Activated CD8-positive, alpha-beta T cell treated with anti-CD3 and anti-CD28 coated beads for 36 hours (primary cell): ENCODE measurements at regions of chr20 and their contacts with region 1.

Region 1: DNA sequence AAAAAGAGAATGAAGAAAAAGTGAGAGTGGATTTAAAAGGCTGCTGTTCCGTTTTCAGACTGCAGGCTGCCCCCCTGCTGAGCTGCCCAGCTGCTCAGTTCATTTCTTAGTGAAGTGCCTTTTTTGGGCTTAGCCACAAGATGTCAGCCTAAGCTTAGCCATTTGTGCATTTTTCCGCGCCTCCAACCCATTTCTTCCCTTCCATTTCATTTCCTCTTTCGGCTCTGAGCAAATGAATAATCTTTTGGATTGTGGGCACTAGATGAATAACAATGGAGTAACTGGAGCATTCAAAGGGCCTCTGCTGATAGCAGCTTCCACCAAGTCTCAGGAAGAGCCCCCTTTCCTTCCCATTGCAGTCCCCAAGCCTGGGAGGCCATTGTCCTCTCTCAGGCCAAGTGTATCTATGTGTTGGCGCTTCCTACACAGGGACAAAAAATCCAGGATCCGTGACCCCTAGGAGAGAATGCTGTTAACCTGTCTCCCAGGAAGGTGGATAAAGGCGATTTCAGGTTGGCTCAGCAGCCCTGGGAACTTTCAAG is 83.5 kb upstream of the SPTLC3 start:
- DNase-seq: peak; percentile 41
- ATAC-seq: peak; percentile 80
- H3K4me3 Mint-ChIP-seq: no peak overlapping the region
- H3K27ac Mint-ChIP-seq: no peak overlapping the region
- H3K4me1 Mint-ChIP-seq: peaks cover 4% of the 10 kb centered on the region
- H3K27me3 Mint-ChIP-seq: no peaks in the 10 kb centered on the region
- CTCF ChIP-seq: peak; percentile 68

Region 2: DNA sequence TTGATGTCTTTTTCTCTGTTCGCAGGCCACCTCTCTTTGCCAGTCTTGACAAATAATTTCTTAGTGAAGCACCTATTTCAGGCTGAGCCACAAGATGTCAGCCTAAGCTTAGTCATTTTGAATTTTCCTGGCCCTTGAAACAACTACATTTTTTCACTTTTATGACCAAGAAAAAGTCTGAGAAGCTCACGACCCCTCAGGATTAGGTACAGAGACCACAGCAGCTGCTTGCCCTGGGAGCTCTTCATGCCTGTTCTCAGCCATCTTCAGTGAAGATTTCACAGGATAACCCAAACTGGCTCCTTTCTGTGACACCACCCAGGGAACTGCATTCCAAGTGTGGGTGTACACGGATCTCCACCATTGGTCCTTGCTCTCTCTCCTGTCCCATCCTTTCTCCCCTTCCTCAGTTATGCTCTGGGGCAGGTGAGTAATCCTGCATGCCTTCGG is 45.1 kb after region 1 on chr20:
- CTCF ChIA-PET with region 1: interaction called, 8 read pairs
- POLR2A ChIA-PET with region 1: no interaction called
- intact Hi-C with region 1: loop called (anchors 5 kb)
- DNase-seq: peak; percentile 29
- ATAC-seq: no peak
- H3K4me3 Mint-ChIP-seq: no peak overlapping the region
- H3K27ac Mint-ChIP-seq: no peak overlapping the region
- H3K4me1 Mint-ChIP-seq: no peaks in the 10 kb centered on the region
- H3K27me3 Mint-ChIP-seq: no peaks in the 10 kb centered on the region
- CTCF ChIP-seq: peak; percentile 33

Region 3: DNA sequence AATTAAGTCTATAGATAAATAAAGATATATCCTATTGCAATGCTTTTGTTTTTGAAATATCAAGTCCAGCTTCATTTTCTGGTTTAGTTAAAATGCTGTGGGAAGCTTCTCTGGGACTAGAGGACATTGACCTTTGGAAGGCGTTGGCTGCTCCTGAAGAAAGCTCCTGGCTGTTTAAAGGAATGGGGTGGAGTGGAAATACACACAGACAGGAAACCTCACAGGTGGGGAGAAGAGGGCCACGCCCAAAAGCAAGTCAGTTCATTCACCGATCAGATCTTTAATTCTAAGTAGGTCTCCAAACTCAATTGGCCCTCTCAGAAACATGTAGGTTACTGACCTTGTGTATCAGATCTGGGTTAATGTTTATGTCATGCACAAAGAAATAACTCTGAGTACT is 143.1 kb after region 1 on chr20:
- CTCF ChIA-PET with region 1: no interaction called
- POLR2A ChIA-PET with region 1: no interaction called
- intact Hi-C with region 1: no loop called
- DNase-seq: no peak
- ATAC-seq: no peak
- H3K4me3 Mint-ChIP-seq: no peak overlapping the region
- H3K27ac Mint-ChIP-seq: no peak overlapping the region
- H3K4me1 Mint-ChIP-seq: no peaks in the 10 kb centered on the region
- H3K27me3 Mint-ChIP-seq: peaks cover 3% of the 10 kb centered on the region
- CTCF ChIP-seq: no peak

Region 4: DNA sequence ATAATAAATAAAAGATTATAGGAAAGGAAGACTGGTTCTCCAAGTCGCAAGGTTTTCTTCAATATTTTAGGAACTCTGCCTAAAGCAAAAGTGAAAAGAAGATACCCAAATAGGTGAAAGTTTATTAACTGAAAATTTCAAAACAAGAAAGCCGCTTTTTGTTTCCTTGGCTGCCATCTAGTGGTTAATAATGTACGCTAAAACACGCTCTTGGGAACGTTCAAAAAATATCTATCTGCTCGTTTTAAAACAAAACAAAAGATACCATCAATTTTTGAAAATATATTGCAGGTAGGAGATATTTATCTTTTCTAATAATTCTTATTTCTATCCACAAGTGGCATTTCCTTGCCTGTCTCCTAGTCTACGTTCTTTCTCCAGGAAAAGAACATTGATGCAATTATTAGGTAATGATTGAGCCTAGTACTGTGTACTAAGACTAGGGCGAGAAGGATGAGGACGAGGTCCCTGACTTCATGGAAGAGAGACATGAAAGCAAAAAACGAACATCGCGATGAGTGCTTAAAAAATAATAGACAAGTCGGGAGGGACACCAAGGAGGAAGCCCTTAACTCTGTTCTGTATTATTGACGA is 180.7 kb after region 1 on chr20:
- CTCF ChIA-PET with region 1: interaction called, 11 read pairs
- POLR2A ChIA-PET with region 1: no interaction called
- intact Hi-C with region 1: loop called (anchors 5 kb)
- DNase-seq: no peak
- ATAC-seq: no peak
- H3K4me3 Mint-ChIP-seq: no peak overlapping the region
- H3K27ac Mint-ChIP-seq: no peak overlapping the region
- H3K4me1 Mint-ChIP-seq: no peaks in the 10 kb centered on the region
- H3K27me3 Mint-ChIP-seq: peaks cover 5% of the 10 kb centered on the region
- CTCF ChIP-seq: peak; percentile 80

Region 5: DNA sequence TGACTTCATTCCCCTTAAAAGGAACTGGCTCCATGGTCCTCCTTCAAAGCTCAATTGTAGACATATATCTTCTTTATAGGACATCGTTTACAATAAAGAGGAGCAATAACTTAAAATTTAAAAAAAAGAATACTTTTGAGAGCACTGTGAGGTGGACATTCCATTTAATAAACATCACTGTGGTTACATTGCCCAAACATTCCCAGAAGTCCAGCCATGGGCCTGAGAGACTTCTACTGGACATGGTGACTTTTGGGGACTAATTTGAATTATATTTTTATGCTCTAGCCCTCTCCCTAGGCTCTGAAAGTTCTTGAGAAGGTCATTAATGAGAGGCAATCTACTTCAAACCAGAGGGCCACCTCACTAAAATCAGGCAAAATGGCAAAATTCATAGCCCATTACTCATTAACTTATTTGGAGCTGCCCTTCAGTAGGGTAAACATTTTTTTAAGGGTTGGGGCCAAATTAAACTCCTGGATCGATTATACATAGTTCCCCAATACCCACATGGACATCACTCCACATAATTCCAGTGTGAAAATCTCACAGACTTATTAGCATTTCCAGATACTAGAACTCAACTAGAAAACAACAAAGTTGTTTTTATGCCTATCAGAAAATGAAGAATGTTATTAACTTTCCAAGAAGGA is 312.8 kb after region 1 on chr20:
- CTCF ChIA-PET with region 1: no interaction called
- POLR2A ChIA-PET with region 1: no interaction called
- intact Hi-C with region 1: no loop called
- DNase-seq: no peak
- ATAC-seq: no peak
- H3K4me3 Mint-ChIP-seq: no peak overlapping the region
- H3K27ac Mint-ChIP-seq: no peak overlapping the region
- H3K4me1 Mint-ChIP-seq: no peaks in the 10 kb centered on the region
- H3K27me3 Mint-ChIP-seq: no peaks in the 10 kb centered on the region
- CTCF ChIP-seq: no peak